ENCODE measurements at regions of chr11 and their contacts with region 1.

Region 1: GRCh38 chr11:63478896-63479295 is 12.1 kb downstream of the PLAAT5 start:
- DNase-seq: peak; percentile 23
- ATAC-seq: peak; percentile 83
- H3K4me3 ChIP-seq: no peak overlapping the region
- H3K27ac ChIP-seq: no peak overlapping the region
- H3K4me1 ChIP-seq: no peaks in the 10 kb centered on the region
- H3K27me3 ChIP-seq: no peaks in the 10 kb centered on the region
- CTCF ChIP-seq: peak; percentile 83 to 96 (median 89); a peak in 5 of 6 replicates
- EP300 ChIP-seq: no peak
- POLR2A ChIP-seq: no peak
- RAD21 ChIP-seq: peak; percentile 100

Region 2: DNA sequence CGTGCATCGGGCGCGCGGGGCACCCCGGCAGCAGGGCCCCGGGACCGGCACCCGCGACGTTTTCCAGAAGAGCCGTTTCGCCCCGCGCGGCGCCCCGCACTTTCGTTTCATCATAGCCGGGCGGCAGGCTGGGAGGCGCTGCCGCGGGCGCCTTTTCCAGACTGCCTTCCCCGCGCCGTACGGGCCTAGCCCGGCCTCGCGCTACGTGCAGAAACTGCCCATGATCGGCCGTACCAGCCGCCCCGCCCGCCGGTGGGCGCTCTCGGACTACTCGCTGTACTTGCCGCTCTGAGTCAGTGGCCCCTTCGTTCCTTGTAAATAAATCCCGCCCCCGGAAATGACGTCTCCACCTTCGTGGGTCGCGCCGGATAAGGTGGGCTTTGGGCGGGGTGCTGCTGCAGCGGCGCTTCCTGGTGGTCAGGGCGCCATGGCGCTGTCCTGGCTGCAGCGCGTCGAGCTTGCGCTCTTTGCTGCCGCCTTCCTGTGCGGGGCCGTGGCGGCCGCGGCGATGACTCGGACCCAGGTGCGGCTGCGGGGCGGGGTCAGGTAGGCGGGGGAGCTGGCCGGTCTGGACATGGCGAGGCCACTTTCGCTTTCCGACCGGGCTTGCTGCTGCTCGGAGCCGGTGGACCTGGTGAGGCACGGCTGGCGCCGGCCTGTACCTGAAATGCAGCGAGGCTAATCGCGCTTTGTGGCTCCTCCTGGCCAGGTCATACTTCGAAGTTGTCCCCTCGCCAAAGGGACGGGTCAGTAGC is 691.7 kb before region 1 on chr11 and contains the start of gene TMEM179B:
- CTCF ChIA-PET with region 1: no interaction called
- POLR2A ChIA-PET with region 1: no interaction called
- RAD21 ChIA-PET with region 1: no interaction called
- SMC1A ChIA-PET with region 1: no interaction called
- in situ Hi-C with region 1: no loop called
- intact Hi-C with region 1: no loop called
- DNase-seq: peak; percentile 88
- ATAC-seq: peak; percentile 80
- H3K4me3 ChIP-seq: peak within 1 kb of the TSS; percentile 95
- H3K27ac ChIP-seq: peak within 1 kb of the TSS; percentile 64
- H3K4me1 ChIP-seq: peaks cover 7% of the 10 kb centered on the region
- H3K27me3 ChIP-seq: no peaks in the 10 kb centered on the region
- CTCF ChIP-seq: peak; percentile 65 to 75 (median 74)
- EP300 ChIP-seq: no peak
- POLR2A ChIP-seq: peak; percentile 99
- RAD21 ChIP-seq: peak; percentile 58
- polyA plus RNA-seq, gene TMEM179B: 57.8 to 62.8 TPM

Region 3: GRCh38 chr11:63462137-63462536 is 16.8 kb before region 1 on chr11:
- CTCF ChIA-PET with region 1: interaction called, 10 read pairs
- POLR2A ChIA-PET with region 1: no interaction called
- RAD21 ChIA-PET with region 1: no interaction called
- SMC1A ChIA-PET with region 1: interaction called, 3 read pairs
- in situ Hi-C with region 1: no loop called
- intact Hi-C with region 1: no loop called
- DNase-seq: no peak
- ATAC-seq: no peak
- H3K4me3 ChIP-seq: no peak overlapping the region
- H3K27ac ChIP-seq: no peak overlapping the region
- H3K4me1 ChIP-seq: no peaks in the 10 kb centered on the region
- H3K27me3 ChIP-seq: no peaks in the 10 kb centered on the region
- CTCF ChIP-seq: no peak
- EP300 ChIP-seq: no peak
- POLR2A ChIP-seq: no peak
- RAD21 ChIP-seq: no peak

Region 4: DNA sequence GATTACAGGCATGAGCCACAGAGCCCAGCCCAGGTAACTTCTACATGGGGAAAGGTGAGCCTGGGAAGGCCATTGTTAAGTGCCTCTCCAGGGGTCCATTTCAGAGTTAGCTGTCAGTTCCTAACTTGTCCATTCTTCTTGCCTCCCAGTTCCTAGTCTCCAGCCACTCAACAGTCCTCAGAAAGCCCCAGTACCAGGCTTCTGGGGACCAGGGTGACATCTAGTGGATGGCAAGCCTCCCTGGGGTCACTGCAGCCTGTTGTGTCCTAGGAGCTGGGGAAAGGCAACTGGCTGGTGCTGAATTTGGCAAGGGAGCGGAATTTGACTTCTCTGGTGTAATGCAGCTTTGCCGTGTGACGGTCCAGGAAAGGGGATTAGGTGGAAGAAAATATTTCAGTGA is 29.1 kb after region 1 on chr11:
- CTCF ChIA-PET with region 1: interaction called, 16 read pairs
- POLR2A ChIA-PET with region 1: no interaction called
- RAD21 ChIA-PET with region 1: interaction called, 7 read pairs
- SMC1A ChIA-PET with region 1: interaction called, 6 read pairs
- in situ Hi-C with region 1: no loop called
- intact Hi-C with region 1: no loop called
- DNase-seq: no peak
- ATAC-seq: peak; percentile 76
- H3K4me3 ChIP-seq: no peak overlapping the region
- H3K27ac ChIP-seq: no peak overlapping the region
- H3K4me1 ChIP-seq: peaks cover 5% of the 10 kb centered on the region; the same call in 1 of the 2 replicates
- H3K27me3 ChIP-seq: no peaks in the 10 kb centered on the region; a peak in 1 of 4 replicates
- CTCF ChIP-seq: peak; percentile 37 to 41 (median 41); a peak in 5 of 6 replicates
- EP300 ChIP-seq: no peak
- POLR2A ChIP-seq: no peak
- RAD21 ChIP-seq: peak; percentile 31

Region 5: DNA sequence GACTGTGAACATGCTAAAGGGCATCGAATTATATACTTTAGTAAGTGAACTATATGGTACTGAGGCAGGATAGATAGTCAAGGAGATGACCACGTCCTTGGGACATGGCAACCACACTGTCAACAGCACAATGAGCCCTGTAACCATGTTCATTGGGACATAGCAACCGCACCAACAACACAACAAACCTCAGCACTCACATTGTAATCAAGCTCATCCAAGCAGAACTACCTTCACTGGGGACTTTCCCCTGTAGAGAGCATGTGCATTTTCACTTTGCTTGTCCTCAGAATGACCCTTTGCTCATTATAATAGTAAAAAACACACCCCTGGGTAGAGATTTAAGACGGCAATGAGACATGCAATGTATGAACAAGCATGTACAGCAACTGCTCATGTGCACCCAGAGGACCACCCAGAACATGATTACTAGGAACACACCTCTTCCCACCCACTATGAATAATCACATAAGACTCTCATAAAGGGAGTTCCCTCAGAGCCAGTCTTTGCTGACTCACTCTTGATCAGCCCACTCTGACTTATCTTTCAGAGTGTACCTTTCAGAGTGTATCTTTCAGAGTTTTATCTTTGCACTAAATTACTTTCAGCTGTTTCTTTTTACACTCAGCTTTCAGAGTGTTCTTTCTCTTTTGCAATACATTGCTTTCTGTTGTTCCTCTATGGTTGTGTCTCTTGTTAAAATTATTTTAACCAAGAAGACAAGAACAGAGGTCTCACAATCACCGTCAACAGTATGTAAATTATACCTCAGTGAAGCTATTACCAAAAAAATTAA is 88.3 kb after region 1 on chr11:
- CTCF ChIA-PET with region 1: interaction called, 12 read pairs
- POLR2A ChIA-PET with region 1: no interaction called
- RAD21 ChIA-PET with region 1: interaction called, 16 read pairs
- SMC1A ChIA-PET with region 1: interaction called, 6 read pairs
- in situ Hi-C with region 1: no loop called
- intact Hi-C with region 1: no loop called
- DNase-seq: peak; percentile 95
- ATAC-seq: peak; percentile 87
- H3K4me3 ChIP-seq: peak overlapping the region; percentile 28; the same call in 1 of the 2 replicates
- H3K27ac ChIP-seq: peak overlapping the region; percentile 72
- H3K4me1 ChIP-seq: peaks cover 56% of the 10 kb centered on the region
- H3K27me3 ChIP-seq: no peaks in the 10 kb centered on the region
- CTCF ChIP-seq: no peak
- EP300 ChIP-seq: peak; percentile 92 to 99
- POLR2A ChIP-seq: no peak
- RAD21 ChIP-seq: no peak

Region 6: DNA sequence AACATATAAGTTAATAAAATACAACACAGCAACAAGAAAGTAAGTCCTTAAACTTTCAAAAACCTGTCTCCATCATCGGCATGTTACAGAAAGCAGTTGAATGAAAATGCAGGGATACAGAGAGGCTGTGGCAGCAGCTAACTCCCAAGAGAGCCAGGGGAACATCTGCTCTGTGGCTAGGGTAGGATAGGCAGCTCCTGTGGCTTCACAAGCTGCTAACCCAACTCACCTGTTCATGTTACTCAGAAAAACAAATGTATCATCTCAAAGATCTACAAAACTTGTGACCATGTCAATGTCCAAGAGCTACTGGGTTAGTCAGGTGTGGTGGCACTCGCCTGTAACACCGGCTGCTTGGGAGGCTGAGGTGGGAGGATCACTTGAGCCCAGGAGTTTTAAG is 150.5 kb after region 1 on chr11:
- CTCF ChIA-PET with region 1: interaction called, 206 read pairs
- POLR2A ChIA-PET with region 1: no interaction called
- RAD21 ChIA-PET with region 1: interaction called, 12 read pairs
- SMC1A ChIA-PET with region 1: interaction called, 23 read pairs
- in situ Hi-C with region 1: no loop called
- intact Hi-C with region 1: no loop called
- DNase-seq: no peak
- ATAC-seq: no peak
- H3K4me3 ChIP-seq: no peak overlapping the region
- H3K27ac ChIP-seq: no peak overlapping the region
- H3K4me1 ChIP-seq: peaks cover 8% of the 10 kb centered on the region
- H3K27me3 ChIP-seq: no peaks in the 10 kb centered on the region
- CTCF ChIP-seq: no peak
- EP300 ChIP-seq: no peak
- POLR2A ChIP-seq: no peak
- RAD21 ChIP-seq: no peak

Measured in GM12878 (cell line).